ENCODE measurements at regions of chr1 and their contacts with region 1.

Region 1: DNA sequence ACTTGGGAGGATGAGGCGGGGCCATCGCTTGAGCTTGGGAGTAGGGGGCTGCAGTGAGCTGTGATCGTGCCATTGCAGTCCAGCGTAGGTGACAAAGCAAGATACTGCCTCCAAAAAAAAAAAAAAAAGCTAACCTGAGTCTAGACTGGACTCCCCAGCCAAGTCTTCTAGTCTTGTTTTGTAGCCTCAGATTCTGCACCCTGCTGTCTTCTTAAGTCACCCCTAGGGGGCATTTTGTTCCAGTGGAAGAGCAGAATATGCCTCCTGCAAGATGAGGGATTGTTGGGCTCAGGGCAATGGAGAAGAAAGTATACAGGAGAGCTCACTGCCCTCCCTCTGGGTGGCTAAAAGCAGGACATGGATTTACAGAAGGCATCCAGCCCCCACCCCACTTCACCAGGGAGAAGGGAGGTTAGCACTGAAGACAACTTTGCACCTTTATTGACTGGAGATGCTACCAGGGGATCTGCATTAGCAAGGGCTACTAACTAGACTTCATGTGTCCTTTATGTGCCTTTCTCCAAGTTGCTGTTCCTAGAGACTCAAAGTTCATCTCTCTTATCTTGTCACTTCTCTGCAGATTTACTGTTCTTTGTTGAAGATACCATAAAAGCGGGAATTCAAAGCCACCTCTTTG is 15.3 kb upstream of the RNF187 start:
- DNase-seq: peak in 2 of 7 donors; percentile 31 to 49
- H3K4me3 ChIP-seq: no peak overlapping the region
- H3K27ac ChIP-seq: no peak overlapping the region
- H3K4me1 ChIP-seq: no peaks in the 10 kb centered on the region
- H3K27me3 ChIP-seq: peaks cover 22% of the 10 kb centered on the region
- CTCF ChIP-seq: peak; percentile 32 to 59 (median 50)
- POLR2A ChIP-seq: no peak

Region 2: GRCh38 chr1:228013935-228014930 is 457.6 kb before region 1 on chr1:
- intact Hi-C with region 1: no loop called
- DNase-seq: peak in 5 of 7 donors; percentile 3 to 21 (median 13)
- H3K4me3 ChIP-seq: no peak overlapping the region
- H3K27ac ChIP-seq: no peak overlapping the region
- H3K4me1 ChIP-seq: no peaks in the 10 kb centered on the region
- H3K27me3 ChIP-seq: peaks cover under 1% of the 10 kb centered on the region
- CTCF ChIP-seq: no peak
- POLR2A ChIP-seq: no peak

Region 3: DNA sequence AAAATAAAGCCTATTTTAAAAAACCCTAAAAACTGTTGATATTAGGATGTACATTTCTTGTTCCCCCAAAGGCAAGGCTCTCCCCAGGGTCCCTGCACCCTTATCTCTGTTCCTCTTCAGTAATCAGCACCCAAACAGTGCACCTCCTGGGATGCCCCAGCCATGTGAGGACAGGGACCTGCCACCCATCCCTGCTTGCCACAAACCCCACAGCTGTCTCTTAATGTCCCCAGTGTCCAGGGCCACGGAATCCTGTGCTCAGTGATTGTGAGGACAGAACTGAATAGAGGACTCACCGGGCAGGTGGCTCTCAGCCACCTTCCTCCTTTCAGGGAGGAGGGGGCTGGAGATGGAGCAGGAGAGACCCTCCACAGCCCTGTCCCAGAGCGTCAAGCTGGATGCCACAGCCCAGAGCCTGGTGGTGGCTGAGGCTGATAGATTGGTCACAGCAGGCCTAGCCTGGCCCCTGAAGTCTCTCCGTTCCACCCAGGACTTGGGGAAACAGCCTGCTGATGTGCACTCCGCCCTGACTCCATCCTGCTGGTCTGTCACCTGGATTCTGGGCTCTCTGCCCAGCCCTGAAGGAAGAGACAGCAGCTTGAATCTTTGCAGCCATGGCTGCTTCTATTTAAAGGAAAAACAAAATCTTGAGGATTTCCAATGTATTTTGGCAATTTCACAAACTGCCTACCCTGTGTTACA is 38.4 kb after region 1 on chr1:
- intact Hi-C with region 1: loop called in 1 of 2 experiments (anchors 5 kb)
- DNase-seq: peak in 2 of 7 donors; percentile 8 to 21
- H3K4me3 ChIP-seq: no peak overlapping the region
- H3K27ac ChIP-seq: no peak overlapping the region
- H3K4me1 ChIP-seq: no peaks in the 10 kb centered on the region
- H3K27me3 ChIP-seq: peaks cover 4% of the 10 kb centered on the region
- CTCF ChIP-seq: no peak
- POLR2A ChIP-seq: no peak